A673 (cell line): ENCODE measurements at regions of chr10 and their contacts with region 1.

Region 1: DNA sequence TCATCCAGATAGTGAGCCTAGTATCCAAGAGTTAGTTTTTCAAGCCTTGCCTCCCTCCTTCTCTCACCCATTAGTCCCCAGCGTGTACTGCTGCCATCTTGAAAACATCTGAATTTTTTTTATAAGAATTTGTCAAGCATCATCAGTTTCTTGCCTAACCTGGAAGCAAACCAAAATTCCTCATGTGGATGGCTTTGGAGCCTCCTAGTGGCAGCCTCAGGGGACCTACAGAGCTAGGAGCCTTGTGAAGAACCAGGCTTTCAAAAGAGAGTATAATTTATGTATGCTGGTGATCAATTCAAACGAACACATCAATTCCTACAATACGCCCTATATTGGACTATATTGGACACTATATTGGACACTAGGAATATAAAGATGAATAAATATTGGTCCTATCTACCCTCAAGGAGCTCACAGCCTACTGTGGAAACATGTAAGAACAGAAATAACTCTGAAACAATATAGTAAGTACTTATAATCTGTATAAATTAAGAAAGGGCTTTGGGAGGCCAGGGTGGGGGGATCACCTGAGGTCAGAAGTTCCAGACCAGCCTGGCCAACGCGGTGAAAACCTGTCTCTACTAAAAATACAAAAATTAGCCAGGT is 63.4 kb downstream of the HPSE2 start:
- DNase-seq: peak; percentile 67
- H3K4me3 ChIP-seq: no peak overlapping the region
- H3K27ac ChIP-seq: no peak overlapping the region
- H3K4me1 ChIP-seq: no peaks in the 10 kb centered on the region
- H3K27me3 ChIP-seq: no peaks in the 10 kb centered on the region
- CTCF ChIP-seq: peak; percentile 74

Region 2: DNA sequence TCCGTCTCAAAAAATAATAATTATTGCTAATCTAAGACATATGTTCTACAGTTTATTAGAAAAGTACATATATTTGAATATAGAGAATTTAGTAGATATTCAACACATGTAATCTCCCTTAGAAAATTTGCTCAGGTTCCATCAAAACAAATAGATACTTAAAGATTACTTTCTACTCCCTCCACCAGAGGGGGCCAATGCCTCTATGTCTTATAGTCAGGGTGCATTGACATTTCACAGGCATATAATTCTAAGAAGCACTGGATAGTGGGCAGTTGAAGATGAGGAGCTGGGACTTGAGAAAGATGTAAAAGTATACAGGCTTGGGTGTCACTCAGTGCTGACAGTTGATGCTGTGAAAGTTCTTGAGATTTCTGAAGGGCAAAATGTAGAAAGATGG is 423.9 kb before region 1 on chr10:
- CTCF ChIA-PET with region 1: no interaction called
- POLR2A ChIA-PET with region 1: no interaction called
- intact Hi-C with region 1: loop called (anchors 5 kb)
- DNase-seq: peak; percentile 49
- H3K4me3 ChIP-seq: no peak overlapping the region
- H3K27ac ChIP-seq: no peak overlapping the region
- H3K4me1 ChIP-seq: no peaks in the 10 kb centered on the region
- H3K27me3 ChIP-seq: no peaks in the 10 kb centered on the region
- CTCF ChIP-seq: peak; percentile 55

Region 3: DNA sequence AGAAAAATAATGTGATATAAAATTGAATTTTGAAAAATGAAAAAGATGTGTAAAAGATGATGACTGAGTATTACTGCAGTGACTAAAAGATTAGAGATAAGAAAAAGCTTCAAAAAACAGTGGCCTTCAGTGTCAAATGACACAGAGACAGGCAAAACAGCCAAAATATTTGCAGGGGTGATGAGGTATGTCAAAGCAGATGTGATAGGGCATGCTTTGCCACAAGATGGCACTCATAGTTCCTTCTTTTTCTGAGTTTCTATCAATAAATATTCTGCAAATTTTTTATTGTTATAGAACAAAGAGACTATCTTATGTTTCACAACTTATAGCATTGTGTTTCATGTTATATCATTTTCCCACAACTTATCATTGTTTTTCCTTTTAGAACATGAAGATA is 381.4 kb before region 1 on chr10:
- CTCF ChIA-PET with region 1: no interaction called
- POLR2A ChIA-PET with region 1: no interaction called
- intact Hi-C with region 1: loop called (anchors 5 kb)
- DNase-seq: peak; percentile 11
- H3K4me3 ChIP-seq: no peak overlapping the region
- H3K27ac ChIP-seq: no peak overlapping the region
- H3K4me1 ChIP-seq: no peaks in the 10 kb centered on the region
- H3K27me3 ChIP-seq: no peaks in the 10 kb centered on the region
- CTCF ChIP-seq: peak; percentile 49

Region 4: GRCh38 chr10:98861962-98862361 is 310.3 kb before region 1 on chr10:
- CTCF ChIA-PET with region 1: no interaction called
- POLR2A ChIA-PET with region 1: no interaction called
- intact Hi-C with region 1: loop called (anchors 10 kb)
- DNase-seq: no peak
- H3K4me3 ChIP-seq: no peak overlapping the region
- H3K27ac ChIP-seq: no peak overlapping the region
- H3K4me1 ChIP-seq: no peaks in the 10 kb centered on the region
- H3K27me3 ChIP-seq: no peaks in the 10 kb centered on the region
- CTCF ChIP-seq: no peak